ENCODE measurements at regions of chr7 and their contacts with region 1.

Region 1: GRCh38 chr7:16129431-16130116 is 291.8 kb downstream of the CRPPA start:
- DNase-seq: no peak
- ATAC-seq: peak in 2 of 8 donors; percentile 35 to 44
- H3K4me3 ChIP-seq: no peak overlapping the region
- H3K27ac ChIP-seq: peak overlapping the region in 8 of 10 donors; percentile 2 to 72 (median 42)
- H3K4me1 ChIP-seq: peaks cover 0 to 31% (median 16%) of the 10 kb centered on the region in 9 donors
- H3K27me3 ChIP-seq: no peaks in the 10 kb centered on the region
- CTCF ChIP-seq: no peak

Region 2: DNA sequence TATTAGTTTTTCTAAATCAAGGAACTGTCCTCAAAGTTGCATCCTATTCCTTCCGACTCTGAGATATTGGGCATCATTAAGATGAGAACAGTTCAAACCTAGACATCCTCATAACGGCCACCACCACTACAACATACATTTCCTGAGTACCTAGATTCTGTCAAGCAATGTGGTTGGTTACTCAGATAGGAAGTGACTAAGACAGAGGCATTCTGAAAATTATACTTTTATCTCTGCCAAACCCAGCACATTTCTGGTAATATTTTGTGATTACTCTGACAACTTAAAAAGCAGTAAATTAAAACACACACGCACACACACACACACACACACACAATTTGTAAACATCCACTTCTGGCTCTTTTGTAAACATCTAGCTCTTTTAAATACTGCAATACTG is 151.9 kb before region 1 on chr7:
- intact Hi-C with region 1: no loop called
- DNase-seq: no peak
- ATAC-seq: no peak
- H3K4me3 ChIP-seq: no peak overlapping the region
- H3K27ac ChIP-seq: no peak overlapping the region
- H3K4me1 ChIP-seq: peaks cover 0 to 9% (median 6%) of the 10 kb centered on the region in 9 donors
- H3K27me3 ChIP-seq: no peaks in the 10 kb centered on the region
- CTCF ChIP-seq: no peak

Region 3: GRCh38 chr7:16204953-16205352 is 75.4 kb after region 1 on chr7:
- intact Hi-C with region 1: loop called in 1 of 10 experiments (anchors 5 kb)
- DNase-seq: no peak
- ATAC-seq: no peak
- H3K4me3 ChIP-seq: no peak overlapping the region
- H3K27ac ChIP-seq: peak overlapping the region in 2 of 10 donors; percentile 16 to 36
- H3K4me1 ChIP-seq: peaks cover 0 to 25% (median 8%) of the 10 kb centered on the region in 9 donors
- H3K27me3 ChIP-seq: no peaks in the 10 kb centered on the region
- CTCF ChIP-seq: no peak

Region 4: GRCh38 chr7:16652878-16653277 is 523.3 kb after region 1 on chr7:
- intact Hi-C with region 1: no loop called
- DNase-seq: no peak
- ATAC-seq: peak in 3 of 8 donors; percentile 15 to 23 (median 23)
- H3K4me3 ChIP-seq: no peak overlapping the region
- H3K27ac ChIP-seq: peak overlapping the region in 9 of 10 donors; percentile 28 to 98 (median 72)
- H3K4me1 ChIP-seq: peaks cover 0 to 85% (median 68%) of the 10 kb centered on the region in 9 donors
- H3K27me3 ChIP-seq: no peaks in the 10 kb centered on the region
- CTCF ChIP-seq: no peak